CD4-positive, alpha-beta T cell (primary cell): ENCODE measurements at regions of chr4 and their contacts with region 1.

Region 1: GRCh38 chr4:38319456-38320342 is 344.3 kb upstream of the KLF3 start:
- DNase-seq: peak; percentile 79 to 98 (median 92)
- ATAC-seq: peak; percentile 88
- H3K4me3 ChIP-seq: peak overlapping the region; percentile 43
- H3K4me3 Mint-ChIP-seq: peak overlapping the region; percentile 88
- H3K27ac ChIP-seq: peak overlapping the region; percentile 59 to 60
- H3K27ac Mint-ChIP-seq: peak overlapping the region; percentile 86
- H3K4me1 ChIP-seq: peaks cover 31% of the 10 kb centered on the region
- H3K4me1 Mint-ChIP-seq: peaks cover 68% of the 10 kb centered on the region
- H3K27me3 ChIP-seq: no peaks in the 10 kb centered on the region
- H3K27me3 Mint-ChIP-seq: no peaks in the 10 kb centered on the region
- CTCF ChIP-seq: peak; percentile 99

Region 2: DNA sequence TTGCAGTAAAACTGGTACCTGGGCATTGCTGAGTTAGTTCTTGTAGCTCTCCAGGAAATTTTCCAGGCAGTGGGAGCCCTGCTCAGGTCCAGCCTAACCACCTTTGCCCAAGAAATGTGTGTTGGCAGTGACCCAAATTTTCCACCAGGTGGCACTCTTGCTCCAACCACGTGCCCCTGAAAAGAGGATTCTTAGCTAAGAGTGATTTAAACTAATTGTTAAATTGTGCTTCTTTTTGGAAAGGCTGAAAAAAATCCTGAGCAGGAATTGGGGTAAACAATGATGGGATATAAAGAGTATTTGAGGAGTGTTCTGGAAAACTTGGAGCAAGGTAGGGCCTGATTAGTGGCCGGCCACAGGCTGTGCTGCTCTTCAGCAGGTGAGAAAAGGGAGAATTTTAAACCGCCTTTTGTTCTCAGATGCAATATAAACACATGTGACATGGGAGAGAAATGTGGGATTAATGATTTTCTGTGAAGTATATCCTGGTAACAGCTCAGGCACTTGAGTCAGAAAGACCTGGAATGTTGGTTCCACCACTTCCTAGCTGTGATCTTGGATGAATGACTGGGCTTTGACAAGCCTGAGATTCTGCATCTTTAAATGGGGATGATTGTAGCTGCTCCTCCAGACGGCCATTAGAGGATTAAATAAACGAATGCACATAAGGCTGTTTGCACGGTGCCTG is 139.9 kb before region 1 on chr4:
- CTCF ChIA-PET with region 1: interaction called, 17 read pairs
- POLR2A ChIA-PET with region 1: interaction called, 9 read pairs
- intact Hi-C with region 1: loop called (anchors 2 to 5 kb)
- DNase-seq: peak; percentile 55 to 85 (median 72)
- ATAC-seq: peak; percentile 62
- H3K4me3 ChIP-seq: no peak overlapping the region
- H3K4me3 Mint-ChIP-seq: no peak overlapping the region
- H3K27ac ChIP-seq: no peak overlapping the region
- H3K27ac Mint-ChIP-seq: no peak overlapping the region
- H3K4me1 ChIP-seq: peaks cover 38% of the 10 kb centered on the region
- H3K4me1 Mint-ChIP-seq: peaks cover 44% of the 10 kb centered on the region
- H3K27me3 ChIP-seq: no peaks in the 10 kb centered on the region
- H3K27me3 Mint-ChIP-seq: no peaks in the 10 kb centered on the region
- CTCF ChIP-seq: peak; percentile 99

Region 3: DNA sequence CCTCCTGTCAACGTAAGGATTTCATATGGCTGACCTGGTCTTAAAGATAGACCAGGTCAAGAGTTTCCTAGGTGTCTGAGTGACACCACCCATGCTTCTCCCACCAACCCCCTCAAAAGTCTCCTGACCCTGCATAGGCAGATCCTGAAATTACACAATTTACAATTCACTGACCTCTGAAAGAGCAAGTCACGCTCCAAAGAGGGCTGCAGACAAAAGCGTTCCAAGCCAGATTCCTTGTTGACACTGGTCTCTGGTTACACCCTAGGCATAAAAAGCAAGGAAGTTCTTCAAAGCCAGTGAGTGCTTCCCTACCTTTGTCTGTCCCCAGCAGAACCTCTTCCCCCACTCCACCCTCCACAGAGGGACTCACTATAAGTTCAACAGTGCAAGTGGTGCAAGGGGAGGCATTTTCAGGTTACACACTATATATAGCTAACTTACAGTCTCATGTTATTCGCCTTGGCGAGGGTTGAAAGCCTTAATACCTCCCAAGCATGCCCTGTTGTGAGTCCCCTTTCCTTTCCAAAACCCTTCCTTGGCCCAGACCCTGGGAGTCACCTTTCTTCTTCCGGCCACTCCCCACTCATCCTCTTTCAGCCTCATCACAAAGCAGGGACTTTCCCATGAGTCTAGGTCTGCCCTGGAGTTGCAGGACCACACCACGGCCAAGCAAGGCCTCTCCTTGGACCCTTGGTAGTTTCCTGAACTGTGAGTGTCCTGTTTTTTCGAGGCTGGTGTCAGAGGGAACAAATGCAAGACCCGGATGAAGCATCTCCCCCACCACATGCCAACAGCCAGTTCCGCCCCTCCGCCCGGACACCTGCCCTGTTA is 286.3 kb after region 1 on chr4:
- CTCF ChIA-PET with region 1: no interaction called
- POLR2A ChIA-PET with region 1: no interaction called
- intact Hi-C with region 1: loop called in 1 of 2 experiments (anchors 5 kb)
- DNase-seq: no peak
- ATAC-seq: no peak
- H3K4me3 ChIP-seq: no peak overlapping the region
- H3K4me3 Mint-ChIP-seq: no peak overlapping the region
- H3K27ac ChIP-seq: no peak overlapping the region
- H3K27ac Mint-ChIP-seq: peak overlapping the region; percentile 13
- H3K4me1 ChIP-seq: peaks cover 29% of the 10 kb centered on the region
- H3K4me1 Mint-ChIP-seq: peaks cover 59% of the 10 kb centered on the region
- H3K27me3 ChIP-seq: no peaks in the 10 kb centered on the region
- H3K27me3 Mint-ChIP-seq: no peaks in the 10 kb centered on the region
- CTCF ChIP-seq: no peak

Region 4: GRCh38 chr4:38663801-38664705 is 344.4 kb after region 1 on chr4 and contains the start of gene KLF3:
- CTCF ChIA-PET with region 1: interaction called, 17 read pairs
- POLR2A ChIA-PET with region 1: interaction called, 17 read pairs
- intact Hi-C with region 1: no loop called
- DNase-seq: peak; percentile 87 to 98 (median 94)
- ATAC-seq: peak; percentile 63
- H3K4me3 ChIP-seq: peak within 1 kb of the TSS; percentile 89
- H3K4me3 Mint-ChIP-seq: peak within 1 kb of the TSS; percentile 99
- H3K27ac ChIP-seq: peak within 1 kb of the TSS; percentile 82 to 94
- H3K27ac Mint-ChIP-seq: peak within 1 kb of the TSS; percentile 91
- H3K4me1 ChIP-seq: peaks cover 39% of the 10 kb centered on the region
- H3K4me1 Mint-ChIP-seq: peaks cover 65% of the 10 kb centered on the region
- H3K27me3 ChIP-seq: no peaks in the 10 kb centered on the region
- H3K27me3 Mint-ChIP-seq: no peaks in the 10 kb centered on the region
- CTCF ChIP-seq: no peak
- total RNA-seq, gene KLF3: 203 to 204 TPM

Region 5: GRCh38 chr4:38730830-38731646 is 411.3 kb after region 1 on chr4:
- CTCF ChIA-PET with region 1: interaction called, 12 read pairs
- POLR2A ChIA-PET with region 1: interaction called, 3 read pairs
- intact Hi-C with region 1: loop called (anchors 2 kb)
- DNase-seq: peak; percentile 67 to 92 (median 80)
- ATAC-seq: peak; percentile 79
- H3K4me3 ChIP-seq: no peak overlapping the region
- H3K4me3 Mint-ChIP-seq: no peak overlapping the region
- H3K27ac ChIP-seq: no peak overlapping the region
- H3K27ac Mint-ChIP-seq: no peak overlapping the region
- H3K4me1 ChIP-seq: peaks cover 18% of the 10 kb centered on the region
- H3K4me1 Mint-ChIP-seq: peaks cover 20% of the 10 kb centered on the region
- H3K27me3 ChIP-seq: no peaks in the 10 kb centered on the region
- H3K27me3 Mint-ChIP-seq: no peaks in the 10 kb centered on the region
- CTCF ChIP-seq: peak; percentile 99